GM13976 (cell line): ENCODE measurements at regions of chr1 and their contacts with region 1.

Region 1: GRCh38 chr1:244272471-244273261 is 179.0 kb downstream of the ADSS2 start:
- DNase-seq: peak; percentile 78
- CTCF ChIP-seq: peak; percentile 95

Region 2: GRCh38 chr1:243343970-243344937 is 928.4 kb before region 1 on chr1:
- in situ Hi-C with region 1: loop called (anchors 10 kb)
- DNase-seq: peak; percentile 47
- CTCF ChIP-seq: peak; percentile 31

Region 3: DNA sequence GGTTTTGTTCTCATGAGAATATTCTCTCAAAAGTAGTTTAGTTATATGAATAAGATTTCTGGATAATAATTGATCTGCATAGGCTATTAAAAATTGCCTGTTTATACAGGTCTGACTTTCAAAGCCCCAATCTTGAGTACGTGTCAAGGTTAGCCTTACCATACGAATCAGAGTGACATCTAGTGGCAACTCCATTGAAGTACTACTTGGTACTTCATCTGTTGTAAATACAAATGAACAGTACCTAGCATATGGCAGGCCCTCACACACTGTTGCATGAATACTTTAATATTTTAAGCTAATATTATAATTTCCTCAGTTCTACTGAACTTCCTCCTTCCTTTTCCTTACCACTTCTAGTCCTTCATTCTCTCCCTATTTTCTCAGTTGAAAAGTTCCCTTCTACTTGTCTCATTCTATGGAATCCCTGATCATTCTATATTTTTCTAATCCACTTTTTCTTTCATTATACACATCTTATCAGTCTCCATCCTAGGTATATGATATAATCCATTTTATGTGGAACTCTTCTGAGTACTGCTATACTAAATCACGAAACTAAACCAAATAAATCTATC is 523.9 kb before region 1 on chr1:
- in situ Hi-C with region 1: loop called (anchors 25 kb)
- DNase-seq: peak; percentile 72
- CTCF ChIP-seq: peak; percentile 64